WTC11 (cell line): ENCODE measurements at regions of chr12 and their contacts with region 1.

Region 1: GRCh38 chr12:54134850-54135249 is 53.9 kb downstream of the SMUG1 start:
- DNase-seq: no peak
- ATAC-seq: no peak
- H3K4me3 Mint-ChIP-seq: no peak overlapping the region
- H3K27ac Mint-ChIP-seq: no peak overlapping the region
- H3K4me1 Mint-ChIP-seq: peaks cover 11% of the 10 kb centered on the region; the same call in 1 of the 2 replicates
- H3K27me3 Mint-ChIP-seq: peaks cover 100% of the 10 kb centered on the region
- CTCF ChIP-seq: no peak

Region 2: DNA sequence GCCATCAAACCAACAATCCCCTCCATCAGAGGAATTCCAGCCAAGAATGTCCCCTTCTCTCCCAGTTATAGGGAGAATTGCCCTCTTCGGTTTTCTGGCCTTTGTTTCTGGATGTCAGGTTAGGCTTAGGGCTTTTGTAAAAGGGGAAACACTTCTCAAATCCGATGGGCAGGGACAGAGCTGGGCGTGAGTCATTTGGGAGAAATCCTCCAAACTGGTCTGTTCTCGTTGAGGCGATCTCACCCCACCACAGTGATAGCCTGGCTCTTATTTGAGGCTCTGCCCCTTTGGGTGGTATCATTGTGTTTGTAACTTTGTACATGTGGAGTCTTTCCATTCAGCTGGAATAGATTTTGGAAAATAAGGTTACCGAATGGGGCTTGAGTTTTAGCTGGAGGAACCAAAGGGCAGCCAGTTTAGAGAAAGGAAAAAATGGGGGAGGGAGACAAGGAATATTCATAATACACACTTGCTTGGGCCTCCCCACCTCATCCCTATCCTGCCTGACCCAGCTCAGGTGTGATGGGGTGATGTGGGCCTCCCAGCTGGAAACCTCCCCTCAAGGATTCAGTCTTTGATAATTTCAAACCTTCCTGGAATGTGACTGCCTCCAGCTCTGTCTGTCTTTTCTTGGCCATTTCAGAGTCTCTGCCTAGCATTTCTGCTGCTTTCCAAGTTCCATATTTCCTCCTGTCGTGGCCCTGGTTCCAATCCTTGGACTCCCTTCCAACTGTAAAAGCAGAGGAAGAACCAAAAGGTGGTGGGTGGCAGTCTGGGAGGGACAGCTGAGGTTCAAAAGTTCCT is 73.7 kb before region 1 on chr12:
- CTCF ChIA-PET with region 1: interaction called, 10 read pairs
- POLR2A ChIA-PET with region 1: no interaction called
- DNase-seq: no peak
- ATAC-seq: no peak
- H3K4me3 Mint-ChIP-seq: no peak overlapping the region
- H3K27ac Mint-ChIP-seq: no peak overlapping the region
- H3K4me1 Mint-ChIP-seq: peaks cover 43% of the 10 kb centered on the region
- H3K27me3 Mint-ChIP-seq: peaks cover 98% of the 10 kb centered on the region
- CTCF ChIP-seq: no peak

Region 3: GRCh38 chr12:54148560-54149429 is 13.9 kb after region 1 on chr12:
- CTCF ChIA-PET with region 1: interaction called, 15 read pairs
- POLR2A ChIA-PET with region 1: no interaction called
- DNase-seq: no peak
- ATAC-seq: peak; percentile 27; the same call in 1 of the 2 replicates
- H3K4me3 Mint-ChIP-seq: no peak overlapping the region
- H3K27ac Mint-ChIP-seq: no peak overlapping the region
- H3K4me1 Mint-ChIP-seq: peaks cover 14% of the 10 kb centered on the region
- H3K27me3 Mint-ChIP-seq: peaks cover 37% of the 10 kb centered on the region
- CTCF ChIP-seq: no peak

Region 4: GRCh38 chr12:54164387-54165145 is 29.7 kb after region 1 on chr12:
- CTCF ChIA-PET with region 1: interaction called, 11 read pairs
- POLR2A ChIA-PET with region 1: no interaction called
- DNase-seq: peak; percentile 54
- ATAC-seq: peak; percentile 10; the same call in 1 of the 2 replicates
- H3K4me3 Mint-ChIP-seq: peak overlapping the region; percentile 30
- H3K27ac Mint-ChIP-seq: peak overlapping the region; percentile 15; the same call in 1 of the 2 replicates
- H3K4me1 Mint-ChIP-seq: peaks cover 41% of the 10 kb centered on the region
- H3K27me3 Mint-ChIP-seq: peaks cover 12% of the 10 kb centered on the region; the same call in 1 of the 2 replicates
- CTCF ChIP-seq: no peak

Region 5: DNA sequence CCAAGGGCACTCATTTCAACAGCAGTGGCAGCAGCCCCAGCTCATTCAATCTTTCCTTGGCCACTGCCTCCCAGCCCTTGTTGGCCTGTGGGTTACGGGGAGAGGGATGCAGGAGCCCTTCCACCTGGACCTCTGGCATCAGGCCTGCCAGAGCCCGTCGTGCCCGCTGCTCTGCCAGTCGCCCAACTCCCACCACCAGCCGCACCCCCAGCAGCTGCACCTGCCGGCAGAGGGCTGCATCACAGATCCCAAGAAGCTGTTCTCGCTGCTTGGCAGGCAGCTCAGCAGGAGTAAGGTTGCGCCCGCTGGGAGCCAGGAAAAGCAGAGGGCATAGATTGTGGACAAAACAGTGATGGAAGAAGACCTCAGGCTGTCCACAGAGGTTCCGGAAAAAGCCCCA is 47.2 kb after region 1 on chr12:
- CTCF ChIA-PET with region 1: no interaction called
- POLR2A ChIA-PET with region 1: no interaction called
- DNase-seq: no peak
- ATAC-seq: no peak
- H3K4me3 Mint-ChIP-seq: no peak overlapping the region
- H3K27ac Mint-ChIP-seq: no peak overlapping the region
- H3K4me1 Mint-ChIP-seq: peaks cover 4% of the 10 kb centered on the region
- H3K27me3 Mint-ChIP-seq: peaks cover 21% of the 10 kb centered on the region
- CTCF ChIP-seq: no peak